ENCODE measurements at regions of chr3 and their contacts with region 1.

Region 1: GRCh38 chr3:39327746-39328349 is 1.7 kb upstream of the CCR8 start:
- DNase-seq: peak; percentile 28
- H3K4me3 Mint-ChIP-seq: peak overlapping the region; percentile 39
- H3K27ac Mint-ChIP-seq: peak overlapping the region; percentile 75
- H3K4me1 Mint-ChIP-seq: peaks cover 74% of the 10 kb centered on the region
- H3K27me3 Mint-ChIP-seq: no peaks in the 10 kb centered on the region

Region 2: GRCh38 chr3:39315420-39315819 is 12.4 kb before region 1 on chr3:
- intact Hi-C with region 1: loop called (anchors 1 kb)
- DNase-seq: no peak
- H3K4me3 Mint-ChIP-seq: no peak overlapping the region
- H3K27ac Mint-ChIP-seq: no peak overlapping the region
- H3K4me1 Mint-ChIP-seq: peaks cover 19% of the 10 kb centered on the region
- H3K27me3 Mint-ChIP-seq: peaks cover 9% of the 10 kb centered on the region

Region 3: GRCh38 chr3:39346785-39347585 is 19.1 kb after region 1 on chr3:
- intact Hi-C with region 1: loop called (anchors 1 kb)
- DNase-seq: no peak
- H3K4me3 Mint-ChIP-seq: peak overlapping the region; percentile 15
- H3K27ac Mint-ChIP-seq: peak overlapping the region; percentile 4
- H3K4me1 Mint-ChIP-seq: peaks cover 62% of the 10 kb centered on the region
- H3K27me3 Mint-ChIP-seq: no peaks in the 10 kb centered on the region

Region 4: GRCh38 chr3:39383045-39383880 is 55.4 kb after region 1 on chr3 and contains the start of gene SLC25A38:
- intact Hi-C with region 1: loop called (anchors 2 kb)
- DNase-seq: peak; percentile 74
- H3K4me3 Mint-ChIP-seq: peak within 1 kb of the TSS; percentile 94
- H3K27ac Mint-ChIP-seq: peak within 1 kb of the TSS; percentile 97
- H3K4me1 Mint-ChIP-seq: peaks cover 34% of the 10 kb centered on the region
- H3K27me3 Mint-ChIP-seq: no peaks in the 10 kb centered on the region
- total RNA-seq, gene SLC25A38: 40.0 and 43.1 TPM in 2 replicates

Measured in activated T-helper 1 cell treated with anti-CD3 and anti-CD28 coated beads, Interleukin-12 subunit alpha, Interleukin-12 subunit beta, Interleukin-2, Interleukin-4 antibody, amounts not matched to agents 30 ng/mL and 10 ng/mL and 1 ng/mL, durations not matched to agents 14 hours and 24 hours and 36 hours (primary cell).